Caco-2 (cell line): ENCODE measurements at regions of chr16 and their contacts with region 1.

Region 1: GRCh38 chr16:495127-495748 is 32.3 kb upstream of the CAPN15 start:
- DNase-seq: peak; percentile 71 to 72
- H3K4me3 ChIP-seq: no peak overlapping the region
- H3K4me3 Mint-ChIP-seq: no peak overlapping the region
- H3K27ac Mint-ChIP-seq: no peak overlapping the region
- H3K4me1 ChIP-seq: no peaks in the 10 kb centered on the region
- H3K4me1 Mint-ChIP-seq: no peaks in the 10 kb centered on the region
- H3K27me3 ChIP-seq: no peaks in the 10 kb centered on the region
- H3K27me3 Mint-ChIP-seq: no peaks in the 10 kb centered on the region
- CTCF ChIP-seq: peak; percentile 48 to 62

Region 2: DNA sequence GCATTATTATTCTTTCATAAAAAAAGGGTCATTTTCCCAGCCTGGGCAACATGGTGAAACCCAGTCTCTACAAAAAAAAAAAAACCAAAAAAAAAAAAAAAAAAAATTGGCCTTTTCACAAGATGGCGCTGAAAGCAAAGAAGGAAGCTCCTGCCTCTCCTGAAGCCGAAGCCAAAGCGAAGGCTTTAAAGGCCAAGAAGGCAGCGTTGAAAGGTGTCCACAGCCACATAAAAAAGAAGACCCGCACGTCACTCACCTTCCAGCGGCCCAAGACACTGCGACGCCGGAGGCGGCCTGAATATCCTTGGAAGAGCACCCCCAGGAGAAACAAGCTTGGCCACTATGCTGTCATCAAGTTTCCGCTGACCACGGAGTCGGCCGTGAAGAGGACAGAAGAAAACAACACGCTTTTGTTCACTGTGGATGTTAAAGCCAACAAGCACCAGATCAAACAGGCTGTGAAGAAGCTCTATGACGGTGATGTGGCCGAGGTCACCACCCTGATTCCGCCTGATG is 108.5 kb before region 1 on chr16:
- CTCF ChIA-PET with region 1: interaction called, 8 read pairs
- POLR2A ChIA-PET with region 1: interaction called, 3 read pairs
- intact Hi-C with region 1: loop called (anchors 5 kb)
- DNase-seq: peak in 1 of 2 experiments; percentile 34
- H3K4me3 ChIP-seq: no peak overlapping the region
- H3K4me3 Mint-ChIP-seq: no peak overlapping the region
- H3K27ac Mint-ChIP-seq: no peak overlapping the region
- H3K4me1 ChIP-seq: peaks cover 18% of the 10 kb centered on the region
- H3K4me1 Mint-ChIP-seq: peaks cover 20% of the 10 kb centered on the region
- H3K27me3 ChIP-seq: no peaks in the 10 kb centered on the region
- H3K27me3 Mint-ChIP-seq: no peaks in the 10 kb centered on the region
- CTCF ChIP-seq: no peak